Natural killer cell (primary cell): ENCODE measurements at regions of chr12 and their contacts with region 1.

Region 1: DNA sequence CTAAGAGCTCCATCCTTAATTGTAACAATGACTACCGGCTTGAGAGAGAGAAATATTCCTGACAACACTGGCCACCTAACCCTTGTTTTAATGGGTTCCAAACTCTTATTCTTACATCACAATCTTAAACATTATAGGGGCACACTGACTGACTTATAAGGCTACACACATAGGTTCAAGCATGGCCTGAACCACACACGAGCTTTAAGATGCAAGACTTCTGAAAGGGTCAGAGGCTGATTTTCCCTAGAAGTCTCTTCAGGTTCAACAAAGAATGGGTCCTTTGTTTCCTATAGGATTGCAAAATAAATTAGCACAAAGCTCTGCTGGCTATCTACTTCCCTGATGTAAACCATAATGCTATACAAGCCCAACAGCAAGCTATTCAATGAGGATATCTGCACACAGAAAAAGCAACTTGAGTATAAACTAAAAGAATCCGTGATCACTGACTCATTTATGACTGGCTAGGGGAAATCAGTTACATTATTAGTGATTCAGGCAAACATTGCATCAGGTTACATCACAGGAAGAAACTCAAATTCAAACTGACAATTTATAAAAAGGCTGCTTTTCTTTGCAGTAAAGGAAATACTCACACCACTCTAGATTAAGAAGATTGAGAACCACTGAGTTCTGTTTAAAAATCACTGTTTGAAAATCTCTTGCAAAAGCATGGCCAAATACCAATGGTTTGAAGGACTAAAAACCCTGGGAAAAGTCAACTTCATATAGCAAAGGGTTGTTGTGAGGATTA is 8.5 kb downstream of the BTG1 start:
- DNase-seq: peak in 1 of 2 donors; percentile 35
- ATAC-seq: peak in 1 of 3 donors; percentile 25
- H3K4me3 ChIP-seq: peak overlapping the region; percentile 88
- H3K4me3 Mint-ChIP-seq: peak overlapping the region; percentile 88
- H3K27ac ChIP-seq: peak overlapping the region; percentile 62
- H3K27ac Mint-ChIP-seq: peak overlapping the region; percentile 88 to 98
- H3K4me1 ChIP-seq: peaks cover 30% of the 10 kb centered on the region
- H3K4me1 Mint-ChIP-seq: peaks cover 77 to 89% of the 10 kb centered on the region in 2 donors
- H3K27me3 ChIP-seq: no peaks in the 10 kb centered on the region
- H3K27me3 Mint-ChIP-seq: no peaks in the 10 kb centered on the region
- CTCF ChIP-seq: no peak

Region 2: GRCh38 chr12:92034858-92035401 is 102.2 kb before region 1 on chr12:
- intact Hi-C with region 1: loop called (anchors 2 kb)
- DNase-seq: peak; percentile 26 to 79
- ATAC-seq: peak; percentile 56 to 69 (median 58)
- H3K4me3 ChIP-seq: peak overlapping the region; percentile 17
- H3K4me3 Mint-ChIP-seq: peak overlapping the region; percentile 96
- H3K27ac ChIP-seq: peak overlapping the region; percentile 71
- H3K27ac Mint-ChIP-seq: peak overlapping the region; percentile 97 to 98
- H3K4me1 ChIP-seq: peaks cover 36% of the 10 kb centered on the region
- H3K4me1 Mint-ChIP-seq: peaks cover 57 to 72% of the 10 kb centered on the region in 2 donors
- H3K27me3 ChIP-seq: no peaks in the 10 kb centered on the region
- H3K27me3 Mint-ChIP-seq: no peaks in the 10 kb centered on the region
- CTCF ChIP-seq: no peak

Region 3: GRCh38 chr12:92111256-92111655 is 25.9 kb before region 1 on chr12:
- intact Hi-C with region 1: no loop called
- DNase-seq: no peak
- ATAC-seq: no peak
- H3K4me3 ChIP-seq: no peak overlapping the region
- H3K4me3 Mint-ChIP-seq: no peak overlapping the region
- H3K27ac ChIP-seq: no peak overlapping the region
- H3K27ac Mint-ChIP-seq: no peak overlapping the region
- H3K4me1 ChIP-seq: no peaks in the 10 kb centered on the region
- H3K4me1 Mint-ChIP-seq: peaks cover 22 to 37% of the 10 kb centered on the region in 2 donors
- H3K27me3 ChIP-seq: no peaks in the 10 kb centered on the region
- H3K27me3 Mint-ChIP-seq: no peaks in the 10 kb centered on the region
- CTCF ChIP-seq: no peak

Region 4: DNA sequence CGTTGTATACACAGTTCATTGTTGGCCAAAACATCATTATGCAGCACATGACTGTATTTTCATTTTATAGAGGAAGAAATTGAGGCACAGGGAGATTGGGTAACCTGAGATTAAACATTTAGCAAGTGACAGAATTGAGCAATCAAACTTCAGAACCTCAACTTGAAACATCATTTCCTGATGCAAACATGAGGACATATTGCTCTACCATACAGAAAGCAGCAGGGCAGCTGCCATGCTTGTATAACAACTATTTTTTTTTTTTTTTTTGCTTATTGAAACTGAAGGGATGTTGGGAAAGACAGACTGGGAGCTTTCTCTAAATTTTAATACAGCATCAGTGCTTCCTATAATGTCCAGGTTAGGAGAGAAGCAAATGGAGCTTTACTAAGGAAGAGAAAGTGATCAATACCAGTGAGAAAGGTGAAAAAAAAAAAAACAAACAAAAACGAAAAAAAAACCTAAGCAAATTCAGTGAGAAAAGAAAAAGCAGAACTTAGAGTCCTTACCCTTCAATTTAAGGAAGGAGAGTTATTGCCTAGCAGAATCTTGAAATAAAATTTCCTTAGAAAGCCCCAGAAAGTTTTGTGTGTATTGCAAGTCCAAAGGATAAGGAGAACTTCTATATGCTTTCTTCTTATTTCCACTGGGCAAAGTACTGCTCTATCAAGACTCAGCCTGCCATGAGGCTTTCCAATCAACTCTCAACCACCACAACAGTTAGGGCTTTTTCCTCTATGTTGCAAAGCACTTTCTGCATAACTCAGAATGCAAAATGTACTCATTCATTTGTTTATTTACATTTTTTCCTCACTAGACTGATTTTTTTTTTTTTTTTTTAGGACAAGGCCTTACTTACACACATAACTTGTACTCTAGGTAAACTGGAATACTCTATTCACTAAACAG is 13.1 kb before region 1 on chr12:
- intact Hi-C with region 1: loop called (anchors 2 kb)
- DNase-seq: no peak
- ATAC-seq: peak; percentile 29 to 41 (median 37)
- H3K4me3 ChIP-seq: no peak overlapping the region
- H3K4me3 Mint-ChIP-seq: no peak overlapping the region
- H3K27ac ChIP-seq: no peak overlapping the region
- H3K27ac Mint-ChIP-seq: peak overlapping the region; percentile 6 to 56
- H3K4me1 ChIP-seq: peaks cover 6% of the 10 kb centered on the region
- H3K4me1 Mint-ChIP-seq: peaks cover 51 to 58% of the 10 kb centered on the region in 2 donors
- H3K27me3 ChIP-seq: no peaks in the 10 kb centered on the region
- H3K27me3 Mint-ChIP-seq: no peaks in the 10 kb centered on the region
- CTCF ChIP-seq: no peak